Sigmoid colon (tissue), 7 donors: ENCODE measurements at regions of chr17 and their contacts with region 1.

Region 1: GRCh38 chr17:39754161-39754951 is 16.6 kb downstream of the GRB7 start:
- DNase-seq: peak; percentile 95
- H3K4me3 ChIP-seq: peak overlapping the region; percentile 57 to 92 (median 77)
- H3K27ac ChIP-seq: peak overlapping the region; percentile 93 to 96 (median 94)
- H3K4me1 ChIP-seq: peaks cover 0 to 32% (median 16%) of the 10 kb centered on the region in 4 donors
- H3K27me3 ChIP-seq: no peaks in the 10 kb centered on the region
- CTCF ChIP-seq: peak; percentile 93 to 99 (median 96)
- EP300 ChIP-seq: no peak
- POLR2A ChIP-seq: peak; percentile 66 to 72

Region 2: DNA sequence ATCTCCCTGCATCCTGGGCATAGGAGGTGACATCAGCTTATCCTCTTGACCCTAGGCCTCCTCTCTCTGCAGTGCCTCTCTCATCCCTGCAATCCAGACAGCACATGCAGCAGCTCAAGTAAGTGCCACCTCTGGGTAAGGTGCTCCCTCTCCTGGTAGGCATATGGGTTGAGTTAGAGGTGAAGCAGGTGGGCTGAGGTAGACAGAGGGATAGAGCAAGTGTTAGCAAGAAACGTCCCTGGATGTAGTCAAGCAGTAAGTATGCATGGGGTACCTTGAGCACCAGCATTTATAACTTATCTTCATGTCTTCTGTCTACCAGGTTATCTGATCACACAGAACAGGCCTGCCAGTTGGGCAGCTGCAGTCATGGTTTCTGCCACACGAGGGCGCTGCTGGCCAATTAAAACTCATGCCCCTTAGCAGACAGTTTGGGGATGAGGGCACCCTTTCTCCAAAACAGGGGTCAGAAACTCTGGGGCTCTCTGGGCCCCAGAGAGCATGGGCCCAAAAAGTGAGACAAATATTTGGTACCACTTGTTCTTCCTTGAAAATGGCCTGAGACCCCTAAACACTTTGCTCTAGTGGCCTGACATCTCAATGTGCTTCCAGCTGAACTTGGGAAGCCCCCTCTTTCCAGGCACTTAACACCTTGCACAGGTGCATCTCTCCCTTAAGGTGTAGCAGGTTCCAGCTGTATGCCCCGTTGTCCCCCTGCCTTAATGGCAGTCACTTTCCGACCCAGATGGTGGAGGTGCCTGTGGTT is 206.5 kb before region 1 on chr17:
- intact Hi-C with region 1: loop called (anchors 5 kb)
- DNase-seq: peak; percentile 72
- H3K4me3 ChIP-seq: no peak overlapping the region
- H3K27ac ChIP-seq: peak overlapping the region in 1 of 4 donors; percentile 55
- H3K4me1 ChIP-seq: peaks cover 0 to 26% (median 15%) of the 10 kb centered on the region in 4 donors
- H3K27me3 ChIP-seq: no peaks in the 10 kb centered on the region
- CTCF ChIP-seq: peak; percentile 50 to 81 (median 77)
- EP300 ChIP-seq: no peak
- POLR2A ChIP-seq: no peak

Region 3: GRCh38 chr17:39636927-39637736 is 117.2 kb before region 1 on chr17 and contains the start of gene STARD3:
- intact Hi-C with region 1: loop called (anchors 2 kb)
- DNase-seq: peak; percentile 96
- H3K4me3 ChIP-seq: peak within 1 kb of the TSS; percentile 73 to 88 (median 82)
- H3K27ac ChIP-seq: peak within 1 kb of the TSS; percentile 84 to 89 (median 86)
- H3K4me1 ChIP-seq: peaks cover 0 to 70% (median 48%) of the 10 kb centered on the region in 4 donors
- H3K27me3 ChIP-seq: no peaks in the 10 kb centered on the region
- CTCF ChIP-seq: no peak
- EP300 ChIP-seq: no peak
- POLR2A ChIP-seq: peak; percentile 38 to 66
- total RNA-seq, gene STARD3: 35.3 to 44.1 (median 37.6) TPM

Region 4: GRCh38 chr17:39730095-39730921 is 24.0 kb before region 1 on chr17 and contains the start of gene MIEN1:
- intact Hi-C with region 1: loop called (anchors 1 kb)
- DNase-seq: peak; percentile 95
- H3K4me3 ChIP-seq: peak within 1 kb of the TSS; percentile 62 to 86 (median 72)
- H3K27ac ChIP-seq: peak within 1 kb of the TSS; percentile 86 to 91 (median 87)
- H3K4me1 ChIP-seq: peaks cover 0 to 12% (median 10%) of the 10 kb centered on the region in 4 donors
- H3K27me3 ChIP-seq: no peaks in the 10 kb centered on the region
- CTCF ChIP-seq: peak; percentile 82 to 91 (median 82)
- EP300 ChIP-seq: no peak
- POLR2A ChIP-seq: peak; percentile 62 to 82
- total RNA-seq, gene MIEN1: 52.4 to 65.5 (median 54.8) TPM